ENCODE measurements at regions of chr10 and their contacts with region 1.

Region 1: GRCh38 chr10:23120001-23120934 is 24.9 kb downstream of the MSRB2 start:
- DNase-seq: no peak
- H3K4me3 ChIP-seq: no peak overlapping the region
- H3K27ac ChIP-seq: no peak overlapping the region
- H3K27me3 ChIP-seq: no peaks in the 10 kb centered on the region
- CTCF ChIP-seq: no peak

Region 2: DNA sequence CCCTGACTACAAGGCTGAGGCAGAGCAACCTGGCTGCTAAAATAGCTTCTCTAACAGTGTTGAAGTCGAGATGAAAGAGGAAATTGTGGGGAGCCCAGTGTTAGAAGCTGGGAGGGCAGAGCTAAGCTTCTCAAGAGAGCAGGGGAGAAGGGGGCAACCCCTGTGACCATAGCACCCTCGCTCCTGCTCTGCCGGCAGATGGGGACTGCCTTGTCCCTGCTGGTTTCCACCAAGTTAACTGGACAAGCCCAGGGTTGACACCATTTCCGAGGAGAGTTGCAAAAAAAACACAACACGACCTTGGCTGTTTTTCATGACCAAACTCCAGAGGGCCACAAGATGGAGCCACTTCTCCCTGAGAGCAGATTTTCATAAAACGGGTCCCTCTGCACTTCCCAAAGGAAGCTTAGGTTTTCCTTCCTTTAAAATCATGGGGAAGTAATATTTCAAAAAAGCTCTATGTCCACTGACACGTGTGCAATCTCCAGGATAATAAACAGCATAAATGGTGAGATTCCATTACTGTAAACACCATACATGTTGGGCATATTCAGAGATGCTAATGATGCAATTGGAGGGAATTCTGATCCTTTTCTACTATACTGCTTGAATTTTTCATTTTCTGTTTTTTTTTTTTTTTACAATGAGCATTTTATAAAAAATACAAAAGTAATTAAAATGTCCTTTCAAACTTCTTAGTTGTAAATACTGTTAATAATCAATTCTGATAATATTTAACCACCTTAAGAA is 546.3 kb before region 1 on chr10:
- CTCF ChIA-PET with region 1: no interaction called
- POLR2A ChIA-PET with region 1: no interaction called
- DNase-seq: no peak
- H3K4me3 ChIP-seq: no peak overlapping the region
- H3K27ac ChIP-seq: no peak overlapping the region
- H3K27me3 ChIP-seq: no peaks in the 10 kb centered on the region
- CTCF ChIP-seq: peak; percentile 60

Region 3: DNA sequence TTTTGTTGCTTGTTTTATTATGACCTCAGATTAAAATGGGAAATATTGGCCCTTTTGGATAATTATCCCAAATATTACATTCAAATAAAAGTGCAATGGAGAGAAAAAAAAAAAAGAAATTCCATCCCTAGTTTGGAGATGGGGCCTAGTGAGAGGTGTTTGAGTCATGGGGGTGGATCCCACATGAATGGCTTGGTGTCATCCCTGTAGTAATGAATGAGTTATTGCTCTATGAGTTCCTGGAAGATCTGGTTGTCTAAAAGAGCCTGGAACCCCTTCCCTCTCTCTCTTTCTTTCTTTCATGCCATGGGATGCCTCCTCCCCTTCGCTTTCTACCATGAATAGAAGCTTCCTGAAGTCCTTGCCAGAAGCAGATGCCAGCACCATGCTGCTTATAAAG is 19.4 kb after region 1 on chr10:
- CTCF ChIA-PET with region 1: no interaction called
- POLR2A ChIA-PET with region 1: interaction called, 10 read pairs
- DNase-seq: no peak
- H3K4me3 ChIP-seq: no peak overlapping the region
- H3K27ac ChIP-seq: no peak overlapping the region
- H3K27me3 ChIP-seq: no peaks in the 10 kb centered on the region
- CTCF ChIP-seq: no peak

Measured in AG04450 (cell line).